Esophagus muscularis mucosa (tissue), 4 donors: ENCODE measurements at regions of chr12 and their contacts with region 1.

Region 1: DNA sequence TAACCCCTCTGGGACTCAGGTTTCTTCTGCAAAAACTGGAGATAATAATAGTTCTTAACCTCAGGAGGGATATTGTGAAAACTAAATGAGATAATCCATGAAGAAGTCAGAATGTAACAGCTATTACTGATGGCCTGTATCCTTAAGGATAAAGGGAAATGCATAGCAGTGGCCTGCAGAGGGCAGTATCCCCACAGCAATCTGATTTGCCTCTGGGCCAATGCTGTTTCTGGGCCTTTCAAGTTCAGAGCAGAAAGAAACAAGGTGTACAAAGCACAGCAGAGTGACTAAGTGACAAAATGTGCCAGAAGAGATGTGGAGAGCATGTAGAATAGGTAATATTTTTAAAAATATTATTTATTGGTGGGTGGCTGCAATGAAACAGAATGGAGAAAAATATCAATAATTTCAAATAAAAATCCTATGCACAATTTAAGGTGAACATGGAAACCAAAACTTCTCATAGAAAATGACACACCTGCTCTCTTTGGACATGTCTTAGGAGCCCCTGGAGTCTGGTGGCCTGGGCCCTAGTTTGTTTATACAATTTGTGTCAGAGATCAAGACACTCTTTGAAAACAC is 90.3 kb downstream of the C12orf75 start:
- DNase-seq: no peak
- H3K4me3 ChIP-seq: no peak overlapping the region
- H3K27ac ChIP-seq: no peak overlapping the region
- H3K4me1 ChIP-seq: no peaks in the 10 kb centered on the region
- H3K27me3 ChIP-seq: peaks cover 0 to 3% (median 0%) of the 10 kb centered on the region in 4 donors
- CTCF ChIP-seq: peak; percentile 87 to 92 (median 91)
- EP300 ChIP-seq: no peak
- POLR2A ChIP-seq: no peak

Region 2: DNA sequence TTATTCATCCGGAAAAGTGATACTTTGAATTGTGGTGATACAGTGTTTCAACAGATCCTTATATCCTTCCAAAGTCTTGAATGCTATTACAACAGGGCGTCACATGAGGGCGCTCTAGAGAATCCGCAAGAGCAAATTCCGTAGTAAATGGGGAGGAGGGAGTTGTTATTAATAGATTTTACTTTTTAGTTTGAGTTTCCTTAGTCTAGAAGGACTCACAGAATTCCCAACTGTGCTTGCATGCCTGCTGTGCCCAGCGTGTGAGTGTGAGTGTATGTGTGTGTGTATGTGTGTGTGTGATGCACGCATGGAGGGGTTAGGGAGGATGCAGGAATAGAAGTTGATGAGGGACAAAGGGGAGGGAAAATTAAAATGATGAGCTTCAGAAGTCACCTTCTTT is 285.0 kb after region 1 on chr12:
- intact Hi-C with region 1: loop called (anchors 10 kb)
- DNase-seq: no peak
- H3K4me3 ChIP-seq: no peak overlapping the region
- H3K27ac ChIP-seq: no peak overlapping the region
- H3K4me1 ChIP-seq: peaks cover 6 to 12% (median 9%) of the 10 kb centered on the region in 4 donors
- H3K27me3 ChIP-seq: no peaks in the 10 kb centered on the region
- CTCF ChIP-seq: peak; percentile 57 to 72 (median 59)
- EP300 ChIP-seq: no peak
- POLR2A ChIP-seq: no peak

Region 3: GRCh38 chr12:105798256-105798845 is 377.6 kb after region 1 on chr12:
- intact Hi-C with region 1: no loop called
- DNase-seq: no peak
- H3K4me3 ChIP-seq: no peak overlapping the region
- H3K27ac ChIP-seq: no peak overlapping the region
- H3K4me1 ChIP-seq: no peaks in the 10 kb centered on the region
- H3K27me3 ChIP-seq: no peaks in the 10 kb centered on the region
- CTCF ChIP-seq: no peak
- EP300 ChIP-seq: no peak
- POLR2A ChIP-seq: no peak

Region 4: GRCh38 chr12:106136263-106136662 is 715.5 kb after region 1 on chr12:
- intact Hi-C with region 1: loop called (anchors 5 kb)
- DNase-seq: peak; percentile 98
- H3K4me3 ChIP-seq: peak overlapping the region; percentile 73 to 86 (median 80)
- H3K27ac ChIP-seq: peak overlapping the region; percentile 47 to 96 (median 90)
- H3K4me1 ChIP-seq: peaks cover 45 to 90% (median 81%) of the 10 kb centered on the region in 4 donors
- H3K27me3 ChIP-seq: peaks cover 0 to 14% (median 0%) of the 10 kb centered on the region in 4 donors
- CTCF ChIP-seq: peak; percentile 79 to 82 (median 82)
- EP300 ChIP-seq: no peak
- POLR2A ChIP-seq: no peak

Region 5: DNA sequence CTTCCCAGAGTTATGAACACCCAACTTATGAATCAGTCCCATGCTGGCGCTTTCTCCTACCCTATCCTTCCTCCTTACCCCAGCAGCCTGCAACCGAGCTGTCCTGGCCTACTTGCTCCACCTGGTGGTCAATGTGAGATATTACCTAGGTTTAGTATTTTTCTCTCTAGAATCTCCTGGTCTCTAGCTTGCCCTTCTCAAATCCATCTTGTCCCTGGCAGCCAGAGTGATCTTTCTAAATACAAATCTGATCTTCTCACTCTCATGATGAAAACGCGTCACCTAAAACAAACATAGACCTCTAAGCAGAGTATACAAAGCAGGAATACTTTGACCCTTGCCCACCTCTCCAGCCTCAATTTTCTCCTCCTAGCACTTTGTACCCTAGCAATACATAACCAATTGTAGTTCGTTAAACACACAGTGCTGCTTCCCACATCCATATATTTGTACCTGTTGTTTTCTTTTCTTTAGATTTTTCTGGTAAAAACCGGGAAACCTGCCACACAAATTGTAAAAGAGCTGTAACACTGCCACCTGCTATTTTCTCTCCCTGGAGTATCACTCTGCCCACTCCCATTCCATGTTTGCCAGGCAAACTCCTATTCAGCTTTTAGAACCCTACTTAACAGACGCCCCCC is 861.8 kb after region 1 on chr12:
- intact Hi-C with region 1: loop called (anchors 5 kb)
- DNase-seq: peak; percentile 4
- H3K4me3 ChIP-seq: no peak overlapping the region
- H3K27ac ChIP-seq: no peak overlapping the region
- H3K4me1 ChIP-seq: peaks cover 0 to 5% (median 0%) of the 10 kb centered on the region in 4 donors
- H3K27me3 ChIP-seq: no peaks in the 10 kb centered on the region
- CTCF ChIP-seq: peak; percentile 58 to 70 (median 68)
- EP300 ChIP-seq: no peak
- POLR2A ChIP-seq: no peak